OCI-LY7 (cell line): ENCODE measurements at regions of chr1 and their contacts with region 1.

Region 1: DNA sequence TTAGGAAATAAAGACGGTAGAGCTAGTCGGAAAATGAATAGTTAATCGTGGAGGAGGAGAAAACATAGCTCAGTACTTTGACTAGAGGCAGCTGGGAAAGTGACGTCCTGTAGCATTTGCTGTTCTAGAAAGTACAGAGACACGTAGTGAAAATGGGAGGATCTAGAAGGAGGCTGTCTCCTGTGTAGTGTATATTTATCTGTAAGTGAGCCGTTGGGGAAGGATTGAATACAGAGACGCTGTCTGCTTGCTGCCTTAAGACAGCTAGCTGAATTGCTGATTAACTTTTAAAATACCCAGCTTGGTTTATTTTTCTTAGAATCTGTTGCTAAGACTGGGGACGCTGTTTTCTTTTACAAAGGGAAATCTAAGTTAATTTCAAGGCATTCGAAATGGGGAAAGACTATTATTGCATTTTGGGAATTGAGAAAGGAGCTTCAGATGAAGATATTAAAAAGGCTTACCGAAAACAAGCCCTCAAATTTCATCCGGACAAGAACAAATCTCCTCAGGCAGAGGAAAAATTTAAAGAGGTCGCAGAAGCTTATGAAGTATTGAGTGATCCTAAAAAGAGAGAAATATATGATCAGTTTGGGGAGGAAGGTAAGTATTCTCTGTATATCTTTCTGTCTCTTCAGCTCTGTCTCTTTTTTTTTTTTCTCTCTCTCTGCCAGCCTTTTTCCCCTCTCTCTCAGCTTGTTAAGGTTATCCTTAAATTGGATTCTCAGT is at the start of gene DNAJB4:
- DNase-seq: peak; percentile 94
- H3K4me3 ChIP-seq: peak within 1 kb of the TSS; percentile 72
- H3K27ac ChIP-seq: peak within 1 kb of the TSS; percentile 68
- H3K4me1 ChIP-seq: peaks cover 38% of the 10 kb centered on the region
- CTCF ChIP-seq: no peak
- total RNA-seq, gene DNAJB4: 9.0 and 12.6 TPM in 2 replicates

Region 2: GRCh38 chr1:77759071-77760028 is 245.5 kb before region 1 on chr1 and contains the start of gene USP33:
- CTCF ChIA-PET with region 1: no interaction called
- POLR2A ChIA-PET with region 1: interaction called, 3 read pairs
- intact Hi-C with region 1: loop called (anchors 10 kb)
- DNase-seq: peak; percentile 93
- H3K4me3 ChIP-seq: peak within 1 kb of the TSS; percentile 83
- H3K27ac ChIP-seq: peak within 1 kb of the TSS; percentile 61
- H3K4me1 ChIP-seq: peaks cover 36% of the 10 kb centered on the region
- CTCF ChIP-seq: 0 out of 2 replicates have a peak, but pooled peaks have one; percentile 15
- total RNA-seq, gene USP33: 44.1 and 47.8 TPM in 2 replicates

Region 3: GRCh38 chr1:77926561-77927357 is 78.1 kb before region 1 on chr1:
- CTCF ChIA-PET with region 1: no interaction called
- POLR2A ChIA-PET with region 1: interaction called, 10 read pairs
- intact Hi-C with region 1: no loop called
- DNase-seq: no peak
- H3K4me3 ChIP-seq: peak overlapping the region; percentile 37
- H3K27ac ChIP-seq: no peak overlapping the region
- H3K4me1 ChIP-seq: peaks cover 5% of the 10 kb centered on the region
- CTCF ChIP-seq: no peak

Region 4: DNA sequence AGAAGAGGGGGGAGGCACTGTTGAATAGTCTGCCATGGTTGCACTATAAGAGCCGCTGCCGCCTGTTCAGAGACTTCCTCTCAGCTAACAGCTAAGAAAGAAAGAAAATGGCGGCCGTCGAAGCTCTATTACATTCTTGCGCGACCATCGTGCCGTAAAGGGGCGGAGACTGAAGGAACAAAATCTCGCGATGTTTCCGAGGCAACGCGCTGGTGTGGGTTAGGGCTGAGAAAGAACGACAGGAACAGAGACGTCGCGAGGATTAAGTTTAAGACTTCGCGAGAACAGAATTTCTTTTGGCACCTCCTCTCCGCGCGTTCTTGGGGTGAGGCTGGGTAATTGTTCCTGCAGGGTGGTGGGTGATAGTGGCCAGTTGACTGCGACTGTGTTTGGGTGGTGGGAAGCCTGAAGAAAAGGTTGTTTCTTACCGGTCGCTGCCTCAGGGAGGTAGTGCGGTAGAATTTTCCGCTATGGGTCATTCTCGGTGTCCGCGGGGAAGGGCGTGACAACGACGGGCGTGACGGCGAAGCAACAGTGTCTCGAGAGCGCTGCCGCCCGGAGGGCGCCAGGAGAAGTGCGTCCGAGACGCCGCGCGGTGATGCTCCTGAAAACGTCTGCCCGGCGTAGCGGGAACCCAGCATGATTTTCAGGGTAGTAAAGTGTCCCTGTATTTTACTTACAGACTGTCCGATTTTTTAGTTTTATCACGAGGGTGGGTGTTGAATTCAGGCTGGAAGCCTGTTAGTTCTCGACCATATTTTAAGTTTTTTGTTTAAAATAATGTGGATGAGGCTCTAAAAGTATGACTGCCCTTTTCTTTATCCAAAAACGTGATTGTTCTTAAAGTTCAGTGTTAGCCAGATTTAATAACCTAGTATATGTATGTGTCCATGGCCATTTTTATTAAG is 25.7 kb before region 1 on chr1 and contains the start of gene FUBP1:
- CTCF ChIA-PET with region 1: interaction called, 5 read pairs
- POLR2A ChIA-PET with region 1: interaction called, 193 read pairs
- intact Hi-C with region 1: loop called (anchors 1 kb)
- DNase-seq: peak; percentile 99
- H3K4me3 ChIP-seq: peak within 1 kb of the TSS; percentile 87
- H3K27ac ChIP-seq: peak within 1 kb of the TSS; percentile 90
- H3K4me1 ChIP-seq: peaks cover 44% of the 10 kb centered on the region
- CTCF ChIP-seq: peak; percentile 79
- total RNA-seq, gene FUBP1: 234 and 256 TPM in 2 replicates

Region 5: GRCh38 chr1:77994117-77994705 is 10.7 kb before region 1 on chr1:
- CTCF ChIA-PET with region 1: no interaction called
- POLR2A ChIA-PET with region 1: interaction called, 44 read pairs
- intact Hi-C with region 1: no loop called
- DNase-seq: no peak
- H3K4me3 ChIP-seq: no peak overlapping the region
- H3K27ac ChIP-seq: no peak overlapping the region
- H3K4me1 ChIP-seq: no peaks in the 10 kb centered on the region
- CTCF ChIP-seq: no peak